PC-9 (cell line): ENCODE measurements at regions of chr7 and their contacts with region 1.

Region 1: GRCh38 chr7:100827330-100828227 is at the start of gene EPHB4:
- DNase-seq: peak in 1 of 2 experiments; percentile 85
- H3K4me3 ChIP-seq: peak within 1 kb of the TSS; percentile 68
- H3K27ac ChIP-seq: no peak within 1 kb of the TSS
- H3K4me1 ChIP-seq: peaks cover 12% of the 10 kb centered on the region; the same call in 1 of the 2 replicates
- H3K27me3 ChIP-seq: no peaks in the 10 kb centered on the region
- CTCF ChIP-seq: no peak; the same call in 1 of the 2 replicates
- total RNA-seq, gene EPHB4: 79.4 and 94.6 TPM in 2 replicates

Region 2: GRCh38 chr7:100691676-100692577 is 135.7 kb before region 1 on chr7:
- CTCF ChIA-PET with region 1: no interaction called
- POLR2A ChIA-PET with region 1: no interaction called
- intact Hi-C with region 1: loop called (anchors 5 kb)
- DNase-seq: peak in 1 of 2 experiments; percentile 72
- H3K4me3 ChIP-seq: peak overlapping the region; percentile 97; the same call in 1 of the 2 replicates
- H3K27ac ChIP-seq: no peak overlapping the region
- H3K4me1 ChIP-seq: peaks cover 13% of the 10 kb centered on the region
- H3K27me3 ChIP-seq: no peaks in the 10 kb centered on the region
- CTCF ChIP-seq: peak; percentile 95

Region 3: GRCh38 chr7:100793806-100794660 is 33.5 kb before region 1 on chr7:
- CTCF ChIA-PET with region 1: interaction called, 14 read pairs
- POLR2A ChIA-PET with region 1: no interaction called
- intact Hi-C with region 1: no loop called
- DNase-seq: peak; percentile 51 to 66
- H3K4me3 ChIP-seq: no peak overlapping the region
- H3K27ac ChIP-seq: 0 out of 2 replicates have a peak overlapping the region, but pooled peaks have one; percentile 1
- H3K4me1 ChIP-seq: peaks cover 22% of the 10 kb centered on the region
- H3K27me3 ChIP-seq: no peaks in the 10 kb centered on the region
- CTCF ChIP-seq: no peak

Region 4: DNA sequence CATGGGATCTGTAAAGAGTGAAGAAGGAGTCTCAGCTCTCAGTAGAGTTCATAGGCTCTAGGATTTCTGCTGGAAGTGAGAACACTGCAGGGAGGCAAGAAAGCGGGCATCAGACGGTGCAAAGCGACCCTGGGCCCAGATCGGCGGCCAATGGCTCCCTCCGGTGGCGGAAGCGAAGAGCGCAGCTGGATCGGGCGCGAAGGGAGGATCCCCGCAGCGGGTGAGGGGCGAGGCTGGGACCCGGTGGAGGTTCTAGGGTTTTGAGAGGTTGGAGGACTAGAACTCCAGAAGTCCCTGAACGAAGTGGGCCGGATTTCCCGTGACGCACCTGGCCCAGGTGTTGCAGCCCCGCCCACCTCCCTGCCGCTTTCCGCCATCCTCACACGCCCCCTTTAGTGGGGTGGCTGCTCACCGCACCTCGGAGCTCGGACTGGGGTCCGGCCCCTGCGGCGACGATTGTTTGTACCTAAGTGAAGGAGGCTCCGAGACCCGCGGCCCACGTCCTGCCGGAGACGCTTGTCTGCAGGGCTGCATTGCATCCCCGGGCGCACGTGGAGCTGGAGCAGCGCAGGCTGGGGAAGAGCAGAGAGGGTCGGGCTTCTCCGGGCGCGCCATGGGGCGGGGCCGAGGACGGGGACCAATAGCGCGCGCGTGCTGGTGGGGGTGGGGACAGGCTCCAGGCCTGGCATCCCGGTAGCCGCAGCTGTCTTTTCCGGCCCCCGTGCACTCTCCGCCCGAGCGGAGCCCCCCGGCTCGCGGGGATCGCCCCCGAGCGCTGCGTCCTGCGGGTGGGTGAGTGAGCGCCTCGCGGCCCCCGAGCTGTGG is 24.7 kb after region 1 on chr7 and contains the start of gene SLC12A9:
- CTCF ChIA-PET with region 1: interaction called, 6 read pairs
- POLR2A ChIA-PET with region 1: interaction called, 13 read pairs
- intact Hi-C with region 1: loop called (anchors 1 kb)
- DNase-seq: peak; percentile 76 to 93
- H3K4me3 ChIP-seq: peak within 1 kb of the TSS; percentile 97
- H3K27ac ChIP-seq: no peak within 1 kb of the TSS
- H3K4me1 ChIP-seq: peaks cover 9% of the 10 kb centered on the region
- H3K27me3 ChIP-seq: no peaks in the 10 kb centered on the region
- CTCF ChIP-seq: peak; percentile 95
- total RNA-seq, gene SLC12A9: 34.7 and 36.7 TPM in 2 replicates

Region 5: GRCh38 chr7:100880645-100881044 is 53.1 kb after region 1 on chr7:
- CTCF ChIA-PET with region 1: no interaction called
- POLR2A ChIA-PET with region 1: no interaction called
- intact Hi-C with region 1: no loop called
- DNase-seq: no peak
- H3K4me3 ChIP-seq: no peak overlapping the region
- H3K27ac ChIP-seq: no peak overlapping the region
- H3K4me1 ChIP-seq: peaks cover 16% of the 10 kb centered on the region
- H3K27me3 ChIP-seq: no peaks in the 10 kb centered on the region
- CTCF ChIP-seq: no peak

Region 6: DNA sequence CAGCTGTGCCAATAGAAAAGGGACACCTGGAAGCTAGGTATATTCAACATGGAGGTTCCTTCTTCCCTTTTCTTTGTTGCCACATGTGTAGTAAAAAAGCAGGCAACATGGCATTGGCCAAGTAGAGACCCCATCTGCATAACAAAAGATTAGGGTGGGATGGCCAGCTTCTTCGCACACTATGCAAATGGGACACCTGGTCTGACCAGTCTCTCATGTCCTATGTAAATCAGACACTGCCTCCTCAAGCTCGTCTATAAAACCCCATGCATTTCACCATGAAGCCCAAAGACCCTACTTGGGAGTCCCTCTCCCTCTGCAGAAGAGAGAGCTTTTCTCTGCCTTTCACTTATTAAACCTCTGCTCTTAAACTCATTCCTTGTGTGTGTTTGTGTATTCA is 747.6 kb after region 1 on chr7:
- CTCF ChIA-PET with region 1: no interaction called
- POLR2A ChIA-PET with region 1: no interaction called
- intact Hi-C with region 1: no loop called
- DNase-seq: no peak
- H3K4me3 ChIP-seq: no peak overlapping the region
- H3K27ac ChIP-seq: no peak overlapping the region
- H3K4me1 ChIP-seq: no peaks in the 10 kb centered on the region
- H3K27me3 ChIP-seq: peaks cover 7% of the 10 kb centered on the region; the same call in 1 of the 2 replicates
- CTCF ChIP-seq: no peak